Activated CD4-positive, alpha-beta T cell treated with anti-CD3 and anti-CD28 coated beads, Interleukin-2, amount 10 ng/mL, durations not matched to agents 24 days and 14 days (primary cell): ENCODE measurements at regions of chrX and their contacts with region 1.

Region 1: DNA sequence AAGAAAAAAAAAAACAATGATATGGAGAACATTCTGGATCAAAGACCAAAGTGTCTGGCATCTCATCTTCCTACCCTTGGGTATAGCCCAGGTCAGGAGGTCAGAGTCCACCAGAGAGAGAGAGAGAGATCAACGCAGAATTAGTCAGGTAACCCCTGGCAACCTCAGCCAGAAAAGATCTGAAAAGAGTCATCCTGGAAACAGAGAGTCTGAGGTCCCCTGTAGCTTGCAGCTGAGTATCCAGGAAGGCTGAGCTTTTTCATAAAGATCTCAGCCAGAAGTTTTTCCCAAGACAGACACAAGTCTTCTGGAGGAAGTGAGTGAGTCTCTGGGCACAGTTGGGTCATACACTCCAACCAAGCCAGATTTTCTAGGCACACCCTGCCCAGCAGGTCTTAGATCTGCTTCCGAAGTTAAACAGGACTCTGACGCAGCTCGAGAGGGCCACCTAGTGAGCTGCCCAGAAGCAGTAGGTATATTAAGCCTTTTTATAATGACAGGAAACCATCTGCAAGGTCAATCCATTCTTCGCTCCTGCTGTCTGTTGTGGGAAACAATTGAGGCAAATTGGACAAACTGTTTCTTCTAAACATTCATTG is 35.7 kb downstream of the ACE2 start:
- DNase-seq: peak; percentile 68
- H3K4me3 Mint-ChIP-seq: no peak overlapping the region
- H3K27ac Mint-ChIP-seq: no peak overlapping the region
- H3K4me1 Mint-ChIP-seq: no peaks in the 10 kb centered on the region
- H3K27me3 Mint-ChIP-seq: peaks cover 10% of the 10 kb centered on the region

Region 2: DNA sequence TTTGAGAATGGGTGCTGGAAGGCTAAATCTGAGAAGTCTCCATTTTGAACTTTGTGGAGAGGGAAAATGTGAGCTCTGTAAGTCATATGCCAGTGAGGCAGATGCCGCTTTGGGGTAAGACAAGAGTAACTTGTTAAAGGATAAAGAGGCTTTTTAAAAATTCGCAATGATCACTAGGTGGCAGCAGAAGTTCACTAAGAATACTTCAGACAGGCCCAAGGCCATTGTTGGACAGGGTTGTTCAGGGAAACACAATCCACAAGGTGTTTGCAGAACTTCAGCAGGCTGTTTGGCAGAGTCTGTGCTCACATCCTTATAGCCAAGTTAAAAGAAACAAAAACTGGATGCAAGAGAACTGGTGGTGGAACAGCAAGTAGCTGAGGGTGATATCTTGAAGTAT is 216.0 kb before region 1 on chrX:
- intact Hi-C with region 1: loop called (anchors 5 kb)
- DNase-seq: peak; percentile 69
- H3K4me3 Mint-ChIP-seq: no peak overlapping the region
- H3K27ac Mint-ChIP-seq: no peak overlapping the region
- H3K4me1 Mint-ChIP-seq: no peaks in the 10 kb centered on the region
- H3K27me3 Mint-ChIP-seq: peaks cover 11% of the 10 kb centered on the region

Region 3: GRCh38 chrX:15505101-15505500 is 60.0 kb before region 1 on chrX:
- intact Hi-C with region 1: no loop called
- DNase-seq: no peak
- H3K4me3 Mint-ChIP-seq: no peak overlapping the region
- H3K27ac Mint-ChIP-seq: no peak overlapping the region
- H3K4me1 Mint-ChIP-seq: no peaks in the 10 kb centered on the region
- H3K27me3 Mint-ChIP-seq: peaks cover 15% of the 10 kb centered on the region